ENCODE measurements at regions of chr1 and their contacts with region 1.

Region 1: GRCh38 chr1:1687846-1688245 is 4.7 kb downstream of the SLC35E2B start:
- DNase-seq: no peak
- ATAC-seq: no peak
- H3K4me3 Mint-ChIP-seq: no peak overlapping the region
- H3K27ac Mint-ChIP-seq: no peak overlapping the region
- H3K4me1 Mint-ChIP-seq: peaks cover 7% of the 10 kb centered on the region
- H3K27me3 Mint-ChIP-seq: no peaks in the 10 kb centered on the region
- CTCF ChIP-seq: no peak

Region 2: DNA sequence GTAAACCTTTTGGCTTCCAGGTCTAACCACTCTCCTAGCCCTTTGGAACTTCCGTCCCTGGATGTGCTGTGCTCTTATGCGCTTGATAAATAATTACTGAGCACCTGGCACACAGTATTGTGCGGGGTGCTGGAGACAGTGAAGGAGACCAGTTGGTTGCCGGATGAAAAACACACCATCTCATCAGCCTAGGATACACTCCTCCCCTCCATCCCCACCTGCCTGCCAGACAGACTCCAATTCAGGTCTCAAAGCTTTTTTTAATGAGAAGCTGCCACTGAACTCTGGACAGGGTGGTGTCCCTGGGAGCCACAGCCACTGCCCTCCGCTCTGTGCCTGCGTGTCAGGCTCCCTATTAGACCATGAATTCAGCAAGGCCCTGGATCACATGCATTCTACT is 193.9 kb after region 1 on chr1:
- CTCF ChIA-PET with region 1: no interaction called
- POLR2A ChIA-PET with region 1: interaction called, 11 read pairs
- intact Hi-C with region 1: no loop called
- DNase-seq: no peak
- ATAC-seq: no peak
- H3K4me3 Mint-ChIP-seq: no peak overlapping the region
- H3K27ac Mint-ChIP-seq: no peak overlapping the region
- H3K4me1 Mint-ChIP-seq: peaks cover 69% of the 10 kb centered on the region
- H3K27me3 Mint-ChIP-seq: no peaks in the 10 kb centered on the region
- CTCF ChIP-seq: no peak

Measured in activated B cell treated with CpG ODN at 0.5 μM for 24 hours (primary cell).